Testis (tissue), 5 donors: ENCODE measurements at regions of chr9 and their contacts with region 1.

Region 1: GRCh38 chr9:101530077-101530711 is 3.5 kb upstream of the RNF20 start:
- DNase-seq: peak; percentile 79
- H3K4me3 ChIP-seq: no peak overlapping the region
- H3K27ac ChIP-seq: no peak overlapping the region
- H3K4me1 ChIP-seq: peaks cover 9% of the 10 kb centered on the region
- H3K27me3 ChIP-seq: no peaks in the 10 kb centered on the region
- CTCF ChIP-seq: peak; percentile 72 to 76 (median 76)
- POLR2A ChIP-seq: no peak

Region 2: GRCh38 chr9:101400120-101400519 is 130.1 kb before region 1 on chr9:
- intact Hi-C with region 1: loop called (anchors 5 kb)
- DNase-seq: peak; percentile 84
- H3K4me3 ChIP-seq: peak overlapping the region; percentile 78
- H3K27ac ChIP-seq: peak overlapping the region; percentile 94 to 95
- H3K4me1 ChIP-seq: peaks cover 13% of the 10 kb centered on the region
- H3K27me3 ChIP-seq: no peaks in the 10 kb centered on the region
- CTCF ChIP-seq: no peak
- POLR2A ChIP-seq: no peak

Region 3: GRCh38 chr9:101465392-101465791 is 64.8 kb before region 1 on chr9:
- intact Hi-C with region 1: loop called (anchors 10 kb)
- DNase-seq: peak; percentile 49
- H3K4me3 ChIP-seq: no peak overlapping the region
- H3K27ac ChIP-seq: no peak overlapping the region
- H3K4me1 ChIP-seq: no peaks in the 10 kb centered on the region
- H3K27me3 ChIP-seq: no peaks in the 10 kb centered on the region
- CTCF ChIP-seq: no peak
- POLR2A ChIP-seq: no peak